Activated CD8-positive, alpha-beta T cell treated with anti-CD3 and anti-CD28 coated beads for 36 hours (primary cell): ENCODE measurements at regions of chr14 and their contacts with region 1.

Region 1: DNA sequence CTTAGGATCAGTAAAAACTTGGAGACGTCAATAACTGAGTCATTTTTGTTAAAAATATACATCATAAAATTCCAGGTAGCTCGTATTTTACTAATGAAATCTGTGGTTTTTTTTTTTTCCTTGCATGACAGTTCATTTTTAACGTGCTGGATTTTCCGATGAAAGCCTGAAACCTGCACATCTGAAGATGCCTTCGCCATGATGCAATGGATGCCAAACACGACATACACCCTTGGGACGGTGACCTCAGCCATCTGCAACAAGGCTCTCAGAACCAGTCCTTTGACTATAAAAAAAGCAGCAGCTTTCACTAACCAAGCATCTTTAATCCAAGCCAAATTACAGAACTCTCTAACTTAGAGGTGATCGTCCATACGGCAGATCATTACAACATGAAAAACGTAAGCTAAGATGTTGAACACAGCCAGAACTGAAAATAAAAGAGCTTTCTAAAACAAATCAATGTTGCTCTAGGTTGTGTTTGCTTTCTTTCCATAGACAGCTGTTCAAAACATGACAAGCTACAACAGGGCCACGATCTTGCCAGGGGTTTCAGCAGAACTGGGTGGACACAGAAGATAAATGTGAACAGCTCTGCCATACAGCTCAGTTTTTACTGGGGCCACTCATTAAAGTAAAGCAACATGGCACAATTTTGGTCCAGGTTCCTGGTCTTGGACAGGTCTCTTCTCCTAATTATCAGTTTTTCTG is 7.8 kb downstream of the NIN start:
- DNase-seq: peak; percentile 64
- ATAC-seq: peak; percentile 22
- H3K4me3 Mint-ChIP-seq: peak overlapping the region; percentile 71
- H3K27ac Mint-ChIP-seq: peak overlapping the region; percentile 90
- H3K4me1 Mint-ChIP-seq: peaks cover 90% of the 10 kb centered on the region
- H3K27me3 Mint-ChIP-seq: no peaks in the 10 kb centered on the region
- CTCF ChIP-seq: no peak

Region 2: DNA sequence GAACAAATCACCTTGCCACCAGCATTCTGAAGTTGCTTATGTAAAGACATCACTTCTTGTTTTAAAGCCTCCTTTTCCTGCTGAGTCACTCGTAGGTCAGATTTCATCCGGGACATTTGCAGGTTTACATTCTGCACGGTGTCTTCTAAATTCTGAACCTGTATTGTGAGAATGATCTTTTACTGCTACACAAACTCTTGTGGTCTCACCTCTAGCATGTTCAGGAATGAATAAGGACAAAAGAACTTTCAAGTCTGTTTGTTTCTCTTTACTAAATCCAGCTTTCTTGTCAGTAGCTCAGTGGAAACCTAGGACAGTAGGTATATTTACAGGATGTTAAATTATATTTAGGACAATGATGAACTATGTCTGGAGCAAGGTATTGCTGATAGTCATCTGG is 81.6 kb before region 1 on chr14:
- CTCF ChIA-PET with region 1: no interaction called
- POLR2A ChIA-PET with region 1: no interaction called
- intact Hi-C with region 1: no loop called
- DNase-seq: peak; percentile 16
- ATAC-seq: no peak
- H3K4me3 Mint-ChIP-seq: no peak overlapping the region
- H3K27ac Mint-ChIP-seq: peak overlapping the region; percentile 73
- H3K4me1 Mint-ChIP-seq: peaks cover 46% of the 10 kb centered on the region
- H3K27me3 Mint-ChIP-seq: no peaks in the 10 kb centered on the region
- CTCF ChIP-seq: no peak

Region 3: DNA sequence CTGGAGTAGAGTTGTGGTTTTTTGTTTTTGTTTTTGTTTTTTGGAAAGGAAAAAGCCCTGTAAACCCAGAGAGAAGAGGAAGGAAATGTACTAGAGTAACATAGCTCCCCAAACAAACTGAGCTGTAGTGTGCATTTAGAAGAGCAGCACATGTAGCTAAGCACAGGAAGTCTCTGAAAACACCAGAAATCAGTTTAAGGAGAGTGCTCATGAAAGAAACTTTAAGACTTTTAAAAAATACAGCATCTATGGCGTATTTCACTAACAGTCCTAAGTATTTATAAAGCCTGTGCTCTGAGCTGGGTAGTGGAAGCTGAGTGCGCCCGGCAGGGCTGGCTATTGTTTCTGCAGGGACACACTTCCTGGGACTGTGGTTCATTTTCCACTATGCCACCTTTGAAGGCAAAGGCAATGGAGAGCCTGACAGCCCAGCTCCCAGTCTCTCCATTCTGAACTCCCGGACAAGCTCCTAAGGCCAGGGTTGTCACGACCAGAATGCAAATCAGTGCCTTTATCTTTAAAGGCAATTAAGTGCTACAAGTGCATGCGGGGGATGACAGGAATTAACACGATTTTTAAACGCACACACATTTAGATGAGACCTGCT is 37.6 kb before region 1 on chr14:
- CTCF ChIA-PET with region 1: interaction called, 16 read pairs
- POLR2A ChIA-PET with region 1: interaction called, 21 read pairs
- intact Hi-C with region 1: loop called (anchors 5 kb)
- DNase-seq: no peak
- ATAC-seq: no peak
- H3K4me3 Mint-ChIP-seq: no peak overlapping the region
- H3K27ac Mint-ChIP-seq: peak overlapping the region; percentile 77
- H3K4me1 Mint-ChIP-seq: peaks cover 89% of the 10 kb centered on the region
- H3K27me3 Mint-ChIP-seq: no peaks in the 10 kb centered on the region
- CTCF ChIP-seq: no peak